Activated B cell treated with CpG ODN at 0.5 μM for 24 hours (primary cell): ENCODE measurements at regions of chr5 and their contacts with region 1.

Region 1: GRCh38 chr5:134225618-134226440 is at the start of gene PPP2CA:
- DNase-seq: peak; percentile 100
- ATAC-seq: peak; percentile 79
- H3K4me3 Mint-ChIP-seq: peak within 1 kb of the TSS; percentile 94
- H3K27ac Mint-ChIP-seq: peak within 1 kb of the TSS; percentile 95
- H3K4me1 Mint-ChIP-seq: peaks cover 51% of the 10 kb centered on the region
- H3K27me3 Mint-ChIP-seq: no peaks in the 10 kb centered on the region
- CTCF ChIP-seq: no peak
- total RNA-seq, gene PPP2CA: 103 and 118 TPM in 2 replicates

Region 2: GRCh38 chr5:134101686-134102439 is 124.0 kb before region 1 on chr5:
- CTCF ChIA-PET with region 1: no interaction called
- POLR2A ChIA-PET with region 1: interaction called, 18 read pairs
- intact Hi-C with region 1: no loop called
- DNase-seq: peak; percentile 76
- ATAC-seq: peak; percentile 38
- H3K4me3 Mint-ChIP-seq: peak overlapping the region; percentile 32
- H3K27ac Mint-ChIP-seq: peak overlapping the region; percentile 99
- H3K4me1 Mint-ChIP-seq: peaks cover 56% of the 10 kb centered on the region
- H3K27me3 Mint-ChIP-seq: no peaks in the 10 kb centered on the region
- CTCF ChIP-seq: no peak

Region 3: GRCh38 chr5:134209477-134210240 is 16.2 kb before region 1 on chr5:
- CTCF ChIA-PET with region 1: interaction called, 8 read pairs
- POLR2A ChIA-PET with region 1: interaction called, 14 read pairs
- intact Hi-C with region 1: no loop called
- DNase-seq: no peak
- ATAC-seq: no peak
- H3K4me3 Mint-ChIP-seq: no peak overlapping the region
- H3K27ac Mint-ChIP-seq: no peak overlapping the region
- H3K4me1 Mint-ChIP-seq: peaks cover 60% of the 10 kb centered on the region
- H3K27me3 Mint-ChIP-seq: no peaks in the 10 kb centered on the region
- CTCF ChIP-seq: no peak

Region 4: GRCh38 chr5:134267366-134268018 is 41.7 kb after region 1 on chr5:
- CTCF ChIA-PET with region 1: no interaction called
- POLR2A ChIA-PET with region 1: no interaction called
- intact Hi-C with region 1: no loop called
- DNase-seq: no peak
- ATAC-seq: no peak
- H3K4me3 Mint-ChIP-seq: no peak overlapping the region
- H3K27ac Mint-ChIP-seq: no peak overlapping the region
- H3K4me1 Mint-ChIP-seq: no peaks in the 10 kb centered on the region
- H3K27me3 Mint-ChIP-seq: peaks cover 6% of the 10 kb centered on the region
- CTCF ChIP-seq: no peak

Region 5: DNA sequence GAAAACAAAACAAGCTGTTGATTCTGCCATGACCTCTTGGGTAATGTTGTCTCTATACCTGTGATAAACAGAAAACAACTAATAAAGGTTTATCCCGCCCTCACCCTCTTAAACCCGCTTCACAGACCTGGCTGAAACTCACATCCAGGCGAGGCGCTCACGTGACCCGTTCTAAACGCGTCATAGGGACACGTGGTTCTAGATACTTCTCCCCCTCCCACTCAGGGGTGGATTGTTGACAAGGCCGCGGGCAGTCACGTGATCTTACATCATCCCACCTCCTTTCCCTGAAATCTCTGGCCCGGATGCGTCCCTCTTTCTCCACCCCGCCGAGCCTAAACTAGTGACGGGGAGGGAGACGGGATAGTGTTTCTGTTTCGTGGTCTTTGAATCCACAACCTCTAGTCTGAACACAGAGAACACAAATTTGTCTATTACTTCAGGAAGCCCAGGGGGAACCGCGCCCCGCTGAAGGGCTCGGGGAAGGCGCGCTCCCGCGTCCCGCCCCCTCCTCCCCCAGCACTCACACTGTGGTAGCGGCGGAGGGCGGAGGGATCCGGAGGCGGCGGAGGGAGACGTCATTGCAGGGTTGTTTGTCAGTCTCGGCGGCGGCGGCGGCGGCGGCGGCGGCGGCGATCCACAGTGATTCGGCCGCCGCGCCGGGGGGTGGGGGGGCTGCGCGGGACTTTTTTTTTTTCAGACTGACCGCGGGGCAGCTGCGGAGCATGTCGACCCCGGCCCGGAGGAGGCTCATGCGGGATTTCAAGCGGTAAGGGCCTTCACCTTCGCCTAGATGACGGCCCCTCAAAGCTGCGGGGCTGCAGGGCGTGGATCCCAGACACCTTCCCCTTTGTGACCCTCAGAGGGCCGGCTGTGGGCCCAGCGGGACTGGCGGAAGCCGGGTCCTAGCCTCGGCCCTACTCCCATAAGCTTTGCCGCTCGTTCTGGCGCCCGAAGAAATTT is 145.3 kb after region 1 on chr5 and contains the start of gene UBE2B:
- CTCF ChIA-PET with region 1: no interaction called
- POLR2A ChIA-PET with region 1: interaction called, 8 read pairs
- intact Hi-C with region 1: loop called (anchors 1 kb)
- DNase-seq: peak; percentile 95
- ATAC-seq: peak; percentile 75
- H3K4me3 Mint-ChIP-seq: peak within 1 kb of the TSS; percentile 98
- H3K27ac Mint-ChIP-seq: peak within 1 kb of the TSS; percentile 100
- H3K4me1 Mint-ChIP-seq: peaks cover 54% of the 10 kb centered on the region
- H3K27me3 Mint-ChIP-seq: no peaks in the 10 kb centered on the region
- CTCF ChIP-seq: no peak
- total RNA-seq, gene UBE2B: 60.4 and 64.4 TPM in 2 replicates

Region 6: DNA sequence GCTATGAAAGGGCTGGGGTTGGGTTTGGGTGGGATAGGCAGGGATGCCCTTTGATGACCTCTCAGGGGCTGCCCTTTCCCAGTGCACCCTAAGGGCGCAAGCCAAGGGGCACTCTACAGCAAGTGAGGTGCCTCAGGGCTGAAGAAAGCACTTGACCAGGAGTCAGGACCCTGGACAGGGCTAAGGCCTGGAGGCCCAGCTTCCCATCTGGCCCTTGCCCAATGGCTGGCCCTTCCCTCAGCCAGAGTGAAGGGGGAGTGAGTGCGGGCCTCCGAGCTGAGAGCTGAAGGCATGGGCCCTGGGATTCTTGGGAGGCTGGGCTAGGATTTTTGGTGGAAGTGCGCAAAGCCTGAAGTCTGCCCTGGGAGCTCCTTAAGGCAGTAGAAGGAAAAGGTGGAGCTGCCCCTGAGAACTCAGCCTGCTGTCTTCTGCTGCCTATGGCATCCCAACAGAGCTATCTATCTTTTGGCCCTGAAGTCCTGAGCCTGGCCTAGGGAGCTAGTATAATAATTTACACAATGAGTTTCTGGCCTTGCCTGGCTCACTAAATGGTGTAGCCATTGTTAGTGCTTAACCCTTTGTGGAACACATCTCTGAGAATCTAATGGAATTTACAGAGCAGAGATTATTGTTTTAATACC is 316.0 kb after region 1 on chr5:
- CTCF ChIA-PET with region 1: no interaction called
- POLR2A ChIA-PET with region 1: interaction called, 3 read pairs
- intact Hi-C with region 1: loop called (anchors 5 kb)
- DNase-seq: no peak
- ATAC-seq: no peak
- H3K4me3 Mint-ChIP-seq: peak overlapping the region; percentile 78
- H3K27ac Mint-ChIP-seq: peak overlapping the region; percentile 96
- H3K4me1 Mint-ChIP-seq: peaks cover 86% of the 10 kb centered on the region
- H3K27me3 Mint-ChIP-seq: no peaks in the 10 kb centered on the region
- CTCF ChIP-seq: no peak

Region 7: DNA sequence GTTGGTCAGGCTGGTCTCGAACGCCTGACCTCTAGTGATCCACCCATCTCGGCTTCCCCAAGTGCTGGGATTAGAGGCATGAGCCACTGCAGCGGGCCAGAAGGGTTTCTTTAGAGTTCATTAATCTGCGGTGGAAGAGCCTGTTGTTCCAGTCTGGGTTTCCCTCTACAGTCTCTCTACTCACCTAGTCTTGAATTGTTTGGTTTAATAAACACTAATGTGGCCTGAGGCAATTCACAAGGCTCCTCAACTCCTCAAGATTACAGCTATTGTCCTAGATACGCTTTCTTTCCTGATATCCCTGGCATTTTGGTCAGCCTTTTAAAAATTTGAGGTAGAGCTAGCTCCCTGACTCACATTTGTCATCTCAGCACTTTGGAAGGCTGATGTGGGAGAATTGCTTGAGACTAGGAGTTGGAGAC is 411.3 kb after region 1 on chr5:
- CTCF ChIA-PET with region 1: no interaction called
- POLR2A ChIA-PET with region 1: interaction called, 3 read pairs
- intact Hi-C with region 1: loop called (anchors 1 kb)
- DNase-seq: no peak
- ATAC-seq: no peak
- H3K4me3 Mint-ChIP-seq: no peak overlapping the region
- H3K27ac Mint-ChIP-seq: no peak overlapping the region
- H3K4me1 Mint-ChIP-seq: peaks cover 2% of the 10 kb centered on the region
- H3K27me3 Mint-ChIP-seq: no peaks in the 10 kb centered on the region
- CTCF ChIP-seq: no peak

Region 8: DNA sequence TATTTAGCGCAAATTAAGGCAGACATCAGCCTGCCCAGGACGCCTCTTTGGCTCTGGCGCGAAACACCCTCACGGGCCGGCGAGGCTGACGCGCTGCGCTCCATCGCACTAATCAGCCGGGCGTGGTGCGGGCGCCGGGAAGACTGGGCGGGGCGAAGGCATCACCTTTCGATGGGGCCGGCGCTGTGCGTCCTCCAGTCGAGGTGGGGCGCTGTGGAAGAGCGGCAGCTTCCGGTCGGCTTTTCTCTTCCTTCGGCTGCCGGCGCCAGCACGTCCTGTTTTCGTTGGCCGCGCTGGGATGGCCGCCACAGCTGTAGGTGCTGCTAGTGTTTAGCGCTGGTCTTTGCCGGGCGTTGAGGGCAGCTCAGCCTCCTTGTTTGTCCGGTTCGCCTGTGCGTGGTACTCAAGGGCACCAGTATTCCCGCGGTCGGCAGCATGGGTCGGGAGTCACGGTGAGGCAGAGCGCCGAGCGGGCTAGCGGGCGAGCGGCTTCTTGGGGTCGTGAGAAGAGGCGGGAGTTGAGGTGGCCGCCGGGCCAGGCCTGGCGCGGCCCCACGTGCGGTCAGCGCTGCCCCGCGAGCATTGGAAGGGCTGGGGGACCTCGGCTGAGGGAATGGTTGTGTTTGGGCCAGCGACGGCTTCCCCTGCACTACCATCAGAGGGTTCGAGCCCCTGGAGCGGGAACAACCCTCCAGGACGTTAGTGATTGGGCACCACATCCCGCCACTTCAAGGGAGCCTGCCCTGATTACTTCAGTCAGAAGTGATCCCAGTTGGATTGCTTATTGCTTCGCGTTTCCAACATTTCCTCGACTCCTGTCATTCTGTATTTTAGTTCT is 532.9 kb after region 1 on chr5 and contains the start of gene DDX46:
- CTCF ChIA-PET with region 1: no interaction called
- POLR2A ChIA-PET with region 1: no interaction called
- intact Hi-C with region 1: loop called (anchors 1 kb)
- DNase-seq: peak; percentile 95
- ATAC-seq: peak; percentile 99
- H3K4me3 Mint-ChIP-seq: peak within 1 kb of the TSS; percentile 100
- H3K27ac Mint-ChIP-seq: peak within 1 kb of the TSS; percentile 94
- H3K4me1 Mint-ChIP-seq: peaks cover 36% of the 10 kb centered on the region
- H3K27me3 Mint-ChIP-seq: no peaks in the 10 kb centered on the region
- CTCF ChIP-seq: no peak
- total RNA-seq, gene DDX46: 68.8 and 74.1 TPM in 2 replicates

Region 9: GRCh38 chr5:135271533-135272310 is 1045.9 kb after region 1 on chr5:
- CTCF ChIA-PET with region 1: no interaction called
- POLR2A ChIA-PET with region 1: no interaction called
- intact Hi-C with region 1: no loop called
- DNase-seq: no peak
- ATAC-seq: no peak
- H3K4me3 Mint-ChIP-seq: no peak overlapping the region
- H3K27ac Mint-ChIP-seq: no peak overlapping the region
- H3K4me1 Mint-ChIP-seq: no peaks in the 10 kb centered on the region
- H3K27me3 Mint-ChIP-seq: peaks cover 13% of the 10 kb centered on the region
- CTCF ChIP-seq: no peak